ENCODE measurements at regions of chr1 and their contacts with region 1.

Region 1: DNA sequence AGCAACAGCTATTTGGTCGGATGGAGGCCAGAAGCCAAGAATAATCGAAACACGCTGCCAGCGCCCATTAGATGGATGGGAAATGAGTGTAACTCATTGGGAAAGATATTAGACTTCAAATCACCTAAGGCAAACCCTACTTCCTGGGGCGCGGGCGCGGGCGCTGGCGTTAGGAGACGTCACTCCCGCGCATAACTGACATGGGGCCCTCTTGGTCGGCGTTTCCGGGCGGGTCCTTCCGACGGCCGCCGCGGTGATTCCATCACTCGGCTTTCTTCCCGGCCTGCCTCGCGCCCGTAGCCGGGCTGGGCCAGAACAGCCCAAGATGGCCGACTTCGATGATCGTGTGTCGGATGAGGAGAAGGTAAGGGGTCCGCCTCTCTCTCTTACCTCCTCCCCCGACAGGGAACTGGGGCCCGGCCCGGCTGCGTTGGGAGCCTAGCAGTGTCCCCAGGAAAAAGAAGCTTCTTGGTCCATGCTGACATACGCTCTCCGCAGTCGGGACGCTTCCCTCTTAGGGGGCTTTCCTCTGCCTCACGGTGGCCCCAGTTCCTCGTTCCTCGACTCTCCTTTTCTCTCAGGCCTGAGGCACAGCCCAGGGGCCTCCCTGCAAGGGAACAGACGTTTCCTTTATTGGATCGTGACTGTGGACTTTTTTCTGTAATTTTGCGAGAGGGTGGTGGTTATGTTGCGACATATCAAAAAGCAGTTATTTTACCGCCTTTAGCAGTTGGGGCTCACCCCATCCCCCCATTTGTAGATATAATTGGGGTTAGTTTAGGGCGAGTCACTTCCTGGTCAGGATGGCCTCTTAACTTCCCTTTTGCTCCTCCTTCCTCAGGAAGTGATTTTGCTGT is at the start of gene CAPZA1:
- DNase-seq: peak; percentile 95
- total RNA-seq, gene CAPZA1: 35.3 TPM

Region 2: GRCh38 chr1:112390775-112391602 is 228.8 kb before region 1 on chr1:
- intact Hi-C with region 1: loop called (anchors 2 kb)
- DNase-seq: peak; percentile 92

Region 3: GRCh38 chr1:112501810-112502641 is 117.7 kb before region 1 on chr1:
- intact Hi-C with region 1: loop called (anchors 5 kb)
- DNase-seq: peak; percentile 84

Region 4: GRCh38 chr1:112544011-112544688 is 75.6 kb before region 1 on chr1:
- intact Hi-C with region 1: loop called (anchors 10 kb)
- DNase-seq: no peak

Region 5: GRCh38 chr1:112660072-112660471 is 40.3 kb after region 1 on chr1:
- intact Hi-C with region 1: no loop called
- DNase-seq: no peak

Region 6: GRCh38 chr1:112674439-112674985 is 54.8 kb after region 1 on chr1 and contains the start of gene MOV10:
- intact Hi-C with region 1: loop called (anchors 5 kb)
- DNase-seq: peak; percentile 87
- total RNA-seq, gene MOV10: 18.3 TPM

Region 7: GRCh38 chr1:112706908-112707663 is 87.3 kb after region 1 on chr1 and contains the start of gene RHOC:
- intact Hi-C with region 1: loop called (anchors 1 kb)
- DNase-seq: peak; percentile 93
- total RNA-seq, gene RHOC: 270 TPM

Region 8: GRCh38 chr1:112955781-112956543 is 336.2 kb after region 1 on chr1 and contains the start of gene SLC16A1:
- intact Hi-C with region 1: loop called (anchors 2 kb)
- DNase-seq: peak; percentile 96
- total RNA-seq, gene SLC16A1: 119 TPM

Measured in cardiac septum (tissue), 1 donor.